ENCODE measurements at regions of chr5 and their contacts with region 1.

Region 1: GRCh38 chr5:141512390-141512910 is 23.6 kb downstream of the PCDHGC5 start:
- DNase-seq: peak; percentile 85 to 89 (median 87)
- ATAC-seq: peak; percentile 86
- H3K4me3 ChIP-seq: no peak overlapping the region
- H3K27ac ChIP-seq: no peak overlapping the region
- H3K4me1 ChIP-seq: peaks cover 5 to 17% of the 10 kb centered on the region in 2 experiments; a peak in 3 of 5 replicates
- H3K27me3 ChIP-seq: peaks cover 0 to 7% of the 10 kb centered on the region in 2 experiments; a peak in 1 of 5 replicates
- CTCF ChIP-seq: peak; percentile 75 to 85 (median 83)
- EP300 ChIP-seq: no peak
- POLR2A ChIP-seq: 0 out of 2 replicates have a peak, but pooled peaks have one; percentile 14
- RAD21 ChIP-seq: peak; percentile 24 to 60; a peak in 2 of 4 replicates

Region 2: DNA sequence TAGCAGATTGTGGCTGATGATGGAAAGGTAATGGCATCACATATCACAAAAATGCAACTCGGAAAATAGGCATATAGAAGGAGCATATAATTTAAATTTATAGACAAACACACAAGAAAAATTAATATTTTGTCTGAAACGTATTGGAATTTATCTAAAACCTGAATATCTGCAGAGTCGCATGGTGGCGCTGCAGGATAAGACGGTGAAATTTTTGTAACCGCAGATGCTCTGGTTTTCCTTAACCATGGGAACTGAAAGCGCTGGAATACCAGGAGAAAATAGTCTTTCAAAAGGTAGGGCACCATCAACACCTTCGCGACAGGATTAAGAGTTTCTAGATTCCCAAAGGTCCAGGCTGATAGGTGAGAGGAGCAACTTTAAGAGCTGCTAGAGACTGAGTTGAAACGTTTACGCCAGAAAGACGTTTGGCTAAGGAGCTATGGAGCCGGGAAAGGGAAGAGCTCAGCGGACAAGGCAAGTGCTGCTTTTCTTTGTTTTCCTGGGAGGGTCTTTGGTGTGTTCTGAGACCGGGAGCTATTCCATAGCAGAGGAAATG is 278.3 kb before region 1 on chr5:
- CTCF ChIA-PET with region 1: no interaction called
- POLR2A ChIA-PET with region 1: no interaction called
- in situ Hi-C with region 1: no loop called
- intact Hi-C with region 1: loop called (anchors 10 kb)
- DNase-seq: peak in 1 of 4 experiments; percentile 9
- ATAC-seq: no peak
- H3K4me3 ChIP-seq: no peak overlapping the region
- H3K27ac ChIP-seq: no peak overlapping the region
- H3K4me1 ChIP-seq: peaks cover 0 to 5% of the 10 kb centered on the region in 2 experiments; a peak in 1 of 5 replicates
- H3K27me3 ChIP-seq: peaks cover 2 to 13% of the 10 kb centered on the region in 2 experiments; a peak in 2 of 5 replicates
- CTCF ChIP-seq: peak; percentile 48 to 68 (median 54); a peak in 4 of 6 replicates
- EP300 ChIP-seq: no peak
- POLR2A ChIP-seq: no peak
- RAD21 ChIP-seq: peak; percentile 19 to 37; a peak in 2 of 4 replicates

Region 3: GRCh38 chr5:141338538-141339306 is 173.7 kb before region 1 on chr5 and contains the start of gene PCDHGA2:
- CTCF ChIA-PET with region 1: no interaction called
- POLR2A ChIA-PET with region 1: no interaction called
- in situ Hi-C with region 1: no loop called
- intact Hi-C with region 1: loop called (anchors 5 kb)
- DNase-seq: peak; percentile 57 to 67 (median 62)
- ATAC-seq: peak; percentile 80
- H3K4me3 ChIP-seq: peak within 1 kb of the TSS; percentile 34
- H3K27ac ChIP-seq: no peak within 1 kb of the TSS
- H3K4me1 ChIP-seq: peaks cover 0 to 6% of the 10 kb centered on the region in 2 experiments; a peak in 3 of 5 replicates
- H3K27me3 ChIP-seq: peaks cover 10 to 26% of the 10 kb centered on the region in 2 experiments; a peak in 4 of 5 replicates
- CTCF ChIP-seq: peak; percentile 79 to 84 (median 82)
- EP300 ChIP-seq: no peak
- POLR2A ChIP-seq: no peak
- RAD21 ChIP-seq: peak; percentile 35 to 50; a peak in 3 of 4 replicates
- polyA plus RNA-seq, gene PCDHGA2: not detected

Region 4: GRCh38 chr5:141420855-141421496 is 91.5 kb before region 1 on chr5 and contains the start of gene PCDHGA11:
- CTCF ChIA-PET with region 1: no interaction called
- POLR2A ChIA-PET with region 1: no interaction called
- in situ Hi-C with region 1: no loop called
- intact Hi-C with region 1: loop called (anchors 5 kb)
- DNase-seq: peak; percentile 57 to 61 (median 59)
- ATAC-seq: peak; percentile 83
- H3K4me3 ChIP-seq: peak within 1 kb of the TSS; percentile 17; the same call in 1 of the 2 replicates
- H3K27ac ChIP-seq: no peak within 1 kb of the TSS
- H3K4me1 ChIP-seq: peaks cover 0 to 23% of the 10 kb centered on the region in 2 experiments; a peak in 2 of 5 replicates
- H3K27me3 ChIP-seq: peaks cover 0 to 37% of the 10 kb centered on the region in 2 experiments; a peak in 3 of 5 replicates
- CTCF ChIP-seq: peak; percentile 63 to 80 (median 74)
- EP300 ChIP-seq: no peak
- POLR2A ChIP-seq: no peak
- RAD21 ChIP-seq: peak; percentile 42 to 69
- polyA plus RNA-seq, gene PCDHGA11: not detected

Measured in K562 (cell line).